ENCODE measurements at regions of chr13 and their contacts with region 1.

Region 1: GRCh38 chr13:52652196-52652979 is at the start of gene SUGT1:
- DNase-seq: peak; percentile 96
- H3K4me3 Mint-ChIP-seq: no peak within 1 kb of the TSS
- H3K27ac Mint-ChIP-seq: no peak within 1 kb of the TSS
- H3K4me1 Mint-ChIP-seq: peaks cover 10% of the 10 kb centered on the region
- H3K27me3 Mint-ChIP-seq: no peaks in the 10 kb centered on the region
- total RNA-seq, gene SUGT1: 44.0 to 48.3 TPM

Region 2: GRCh38 chr13:52617070-52618060 is 35.0 kb before region 1 on chr13:
- CTCF ChIA-PET with region 1: interaction called, 10 read pairs
- POLR2A ChIA-PET with region 1: interaction called, 15 read pairs
- DNase-seq: peak; percentile 88
- H3K4me3 Mint-ChIP-seq: peak overlapping the region; percentile 99
- H3K27ac Mint-ChIP-seq: peak overlapping the region; percentile 96
- H3K4me1 Mint-ChIP-seq: peaks cover 37% of the 10 kb centered on the region
- H3K27me3 Mint-ChIP-seq: peaks cover 9% of the 10 kb centered on the region

Region 3: GRCh38 chr13:52665325-52665724 is 12.9 kb after region 1 on chr13:
- CTCF ChIA-PET with region 1: interaction called, 15 read pairs
- POLR2A ChIA-PET with region 1: no interaction called
- DNase-seq: no peak
- H3K4me3 Mint-ChIP-seq: no peak overlapping the region
- H3K27ac Mint-ChIP-seq: no peak overlapping the region
- H3K4me1 Mint-ChIP-seq: no peaks in the 10 kb centered on the region
- H3K27me3 Mint-ChIP-seq: no peaks in the 10 kb centered on the region

Measured in activated CD4-positive, alpha-beta T cell treated with anti-CD3 and anti-CD28 coated beads, Interleukin-2, amount 10 ng/mL, durations not matched to agents 7 days and 5 days (primary cell).